Cardiac septum (tissue), 1 donor: ENCODE measurements at regions of chr3 and their contacts with region 1.

Region 1: GRCh38 chr3:170961616-170962400 is 53.4 kb upstream of the EIF5A2 start:
- DNase-seq: no peak

Region 2: GRCh38 chr3:170869645-170870593 is 91.9 kb before region 1 on chr3 and contains the start of gene RPL22L1:
- intact Hi-C with region 1: no loop called
- DNase-seq: peak; percentile 98
- total RNA-seq, gene RPL22L1: 15.9 TPM

Region 3: GRCh38 chr3:171028025-171028778 is 66.4 kb after region 1 on chr3:
- intact Hi-C with region 1: loop called (anchors 5 kb)
- DNase-seq: no peak

Region 4: GRCh38 chr3:171351676-171352075 is 389.9 kb after region 1 on chr3:
- intact Hi-C with region 1: no loop called
- DNase-seq: no peak